Gastrocnemius medialis (tissue), 4 donors: ENCODE measurements at regions of chr12 and their contacts with region 1.

Region 1: DNA sequence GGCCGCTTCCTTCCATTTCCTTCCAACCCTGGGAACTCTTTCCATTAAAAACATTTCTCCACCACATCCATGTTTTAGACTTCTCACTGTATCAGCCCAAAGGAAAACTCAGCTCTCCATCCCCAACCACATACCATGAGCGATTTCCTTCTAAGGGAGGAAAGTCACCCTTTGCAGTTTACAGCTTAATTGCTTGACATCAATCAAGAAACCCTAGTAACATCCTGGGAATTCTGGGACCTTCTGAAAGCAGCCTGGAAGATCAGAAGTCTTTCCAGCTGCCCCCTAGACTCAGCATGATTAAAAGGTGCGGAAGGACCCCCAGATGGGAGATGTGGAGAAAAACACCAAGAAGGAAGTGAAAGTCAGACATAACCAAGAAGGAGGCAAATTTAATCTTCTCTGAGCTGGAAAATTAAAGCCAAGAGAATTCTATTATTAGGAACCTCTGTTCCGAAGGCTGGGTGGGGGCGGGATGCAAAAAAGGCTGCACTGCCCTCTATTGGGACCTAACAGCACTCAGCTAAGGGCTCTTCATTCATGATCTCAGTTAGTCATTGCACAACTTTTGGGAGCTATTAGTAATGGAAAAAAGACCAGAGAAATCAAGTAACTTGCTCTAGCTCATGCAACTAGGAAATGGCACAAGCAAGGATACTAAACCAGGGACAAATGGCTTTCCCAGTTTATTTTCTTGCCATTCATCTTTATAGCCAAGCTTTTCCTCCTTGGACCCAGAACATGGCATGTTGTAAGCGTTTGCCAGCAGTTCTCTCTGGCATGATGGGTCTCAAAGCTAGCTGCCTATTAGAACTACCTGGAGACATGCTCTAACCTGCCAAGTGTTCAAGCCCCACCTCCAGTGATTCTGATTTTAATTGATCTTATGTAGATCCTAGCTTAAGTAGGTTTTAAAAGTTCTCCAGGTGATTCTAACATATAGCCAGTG is 73.1 kb upstream of the PLXNC1 start:
- DNase-seq: peak; percentile 60 to 80
- ATAC-seq: peak; percentile 78 to 80
- H3K4me3 ChIP-seq: peak overlapping the region in 3 of 4 donors; percentile 4 to 35 (median 13)
- H3K27ac ChIP-seq: peak overlapping the region; percentile 77 to 87 (median 80)
- H3K4me1 ChIP-seq: peaks cover 23 to 36% of the 10 kb centered on the region in 2 donors
- H3K27me3 ChIP-seq: no peaks in the 10 kb centered on the region
- CTCF ChIP-seq: peak; percentile 50 to 77 (median 63)
- POLR2A ChIP-seq: no peak

Region 2: DNA sequence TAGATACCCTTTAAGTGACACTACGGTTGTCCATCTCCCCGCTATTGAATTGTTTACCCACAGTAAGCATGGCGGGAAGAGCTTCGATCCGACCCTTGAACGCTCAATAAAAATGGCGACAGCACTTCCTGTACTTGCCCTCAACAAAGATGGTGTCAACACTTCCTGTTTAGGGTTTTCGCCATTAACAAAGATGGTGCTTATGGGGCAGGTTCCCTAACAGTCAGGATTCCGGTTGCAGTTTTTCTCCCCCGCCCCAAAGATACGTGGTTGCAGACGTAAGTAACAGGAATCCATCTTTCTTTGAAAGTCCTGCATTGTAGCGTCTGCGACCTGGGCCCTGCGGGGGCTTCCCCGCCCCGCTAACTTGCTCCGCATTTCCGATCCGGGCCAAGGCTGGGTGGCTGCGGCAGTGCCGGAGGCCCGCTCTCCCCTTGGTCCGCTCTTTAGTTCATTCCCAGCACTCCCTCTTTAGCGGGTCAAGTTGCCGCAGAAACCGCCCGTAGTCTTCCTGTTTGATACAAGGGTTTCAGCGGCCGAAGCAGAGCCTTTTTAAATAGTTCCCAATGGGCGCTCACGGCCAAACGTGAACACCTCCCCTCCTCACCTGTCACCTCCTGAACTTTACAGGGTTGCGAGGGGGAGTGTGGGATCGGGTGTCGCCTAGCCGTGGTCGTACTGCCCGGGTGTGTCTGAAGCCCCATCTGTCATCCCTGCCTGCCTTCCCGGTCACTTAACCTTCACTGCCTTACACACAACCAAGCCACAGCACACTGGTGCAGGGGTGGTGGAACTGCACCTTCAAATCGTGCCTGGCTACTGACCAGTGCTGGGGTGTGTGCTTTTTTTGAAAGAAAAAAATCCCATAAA is 397.8 kb before region 1 on chr12 and contains the start of gene CRADD:
- in situ Hi-C with region 1: loop called in 1 of 4 experiments (anchors 10 kb)
- intact Hi-C with region 1: loop called (anchors 5 kb)
- DNase-seq: peak; percentile 78 to 84
- ATAC-seq: peak; percentile 92 to 96
- H3K4me3 ChIP-seq: peak within 1 kb of the TSS; percentile 71 to 87 (median 84)
- H3K27ac ChIP-seq: peak within 1 kb of the TSS; percentile 95 to 96 (median 96)
- H3K4me1 ChIP-seq: peaks cover 44 to 47% of the 10 kb centered on the region in 2 donors
- H3K27me3 ChIP-seq: no peaks in the 10 kb centered on the region
- CTCF ChIP-seq: no peak
- POLR2A ChIP-seq: peak; percentile 53 to 70
- total RNA-seq, gene CRADD: 19.4 to 28.7 (median 22.6) TPM

Region 3: DNA sequence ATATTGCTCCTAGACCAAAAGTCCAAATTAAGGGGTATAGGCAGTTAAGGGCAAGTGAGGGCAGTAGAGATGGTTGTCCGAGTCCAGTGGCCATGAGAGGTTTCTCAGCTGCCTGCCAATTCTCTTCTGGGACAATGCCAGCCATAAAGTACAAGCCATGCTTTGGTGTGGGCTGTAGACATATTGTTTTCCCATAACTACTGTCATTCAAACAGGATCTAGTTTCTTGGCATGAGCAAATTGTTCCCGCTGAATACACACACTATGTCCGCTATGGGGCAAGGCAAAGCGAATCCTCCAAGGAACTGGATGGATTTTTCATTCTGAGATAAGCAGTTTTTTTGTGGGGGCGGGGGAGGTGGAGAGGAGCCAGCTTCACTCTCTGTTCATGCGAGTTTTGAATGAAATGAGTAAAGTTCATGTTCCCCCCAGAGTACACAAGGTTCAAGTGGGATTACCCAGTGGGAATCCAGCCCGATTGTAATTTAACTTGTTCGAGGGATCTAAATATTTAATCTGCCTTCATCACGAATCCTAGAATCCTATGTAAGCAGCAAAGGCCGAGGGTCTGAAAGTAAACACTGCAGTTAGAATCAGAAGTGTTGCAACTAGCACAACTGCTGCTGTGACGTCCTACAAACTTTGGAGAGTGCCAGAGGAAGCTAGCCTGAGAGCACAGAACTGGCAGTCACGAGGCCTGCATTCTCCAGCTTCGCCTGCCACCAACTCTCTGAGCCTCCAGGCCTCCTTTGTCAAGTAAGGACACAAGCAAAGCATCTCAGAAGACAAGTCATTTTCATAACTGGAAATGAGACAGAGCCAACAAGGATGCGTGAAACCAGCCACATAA is 261.1 kb before region 1 on chr12:
- in situ Hi-C with region 1: no loop called
- intact Hi-C with region 1: loop called (anchors 2 kb)
- DNase-seq: peak; percentile 95
- ATAC-seq: peak; percentile 93 to 96
- H3K4me3 ChIP-seq: peak overlapping the region; percentile 39 to 45 (median 42)
- H3K27ac ChIP-seq: peak overlapping the region; percentile 90 to 97 (median 96)
- H3K4me1 ChIP-seq: peaks cover 30 to 63% of the 10 kb centered on the region in 2 donors
- H3K27me3 ChIP-seq: no peaks in the 10 kb centered on the region
- CTCF ChIP-seq: peak in 4 of 5 experiments; percentile 12 to 22 (median 16)
- POLR2A ChIP-seq: peak in 1 of 2 donors; percentile 27

Region 4: GRCh38 chr12:93943766-93944165 is 131.5 kb before region 1 on chr12:
- in situ Hi-C with region 1: no loop called
- intact Hi-C with region 1: loop called (anchors 5 kb)
- DNase-seq: peak; percentile 75 to 87
- ATAC-seq: peak; percentile 99 to 100
- H3K4me3 ChIP-seq: no peak overlapping the region
- H3K27ac ChIP-seq: peak overlapping the region; percentile 63 to 81 (median 72)
- H3K4me1 ChIP-seq: peaks cover 6 to 9% of the 10 kb centered on the region in 2 donors
- H3K27me3 ChIP-seq: no peaks in the 10 kb centered on the region
- CTCF ChIP-seq: peak; percentile 34 to 49 (median 42)
- POLR2A ChIP-seq: peak in 1 of 2 donors; percentile 41

Region 5: GRCh38 chr12:93972411-93973208 is 102.6 kb before region 1 on chr12:
- in situ Hi-C with region 1: no loop called
- intact Hi-C with region 1: no loop called
- DNase-seq: no peak
- ATAC-seq: peak; percentile 12 to 30
- H3K4me3 ChIP-seq: no peak overlapping the region
- H3K27ac ChIP-seq: peak overlapping the region in 1 of 4 donors; percentile 45
- H3K4me1 ChIP-seq: peaks cover 26 to 32% of the 10 kb centered on the region in 2 donors
- H3K27me3 ChIP-seq: no peaks in the 10 kb centered on the region
- CTCF ChIP-seq: no peak
- POLR2A ChIP-seq: no peak

Region 6: GRCh38 chr12:93990832-93991803 is 84.1 kb before region 1 on chr12:
- in situ Hi-C with region 1: no loop called
- intact Hi-C with region 1: loop called (anchors 2 kb)
- DNase-seq: peak; percentile 56 to 62
- ATAC-seq: peak; percentile 96 to 98
- H3K4me3 ChIP-seq: peak overlapping the region in 3 of 4 donors; percentile 5 to 42 (median 20)
- H3K27ac ChIP-seq: peak overlapping the region in 2 of 4 donors; percentile 15 to 62
- H3K4me1 ChIP-seq: peaks cover 6 to 9% of the 10 kb centered on the region in 2 donors
- H3K27me3 ChIP-seq: no peaks in the 10 kb centered on the region
- CTCF ChIP-seq: peak; percentile 29 to 69 (median 35)
- POLR2A ChIP-seq: no peak